Panc1 (cell line): ENCODE measurements at regions of chr3 and their contacts with region 1.

Region 1: DNA sequence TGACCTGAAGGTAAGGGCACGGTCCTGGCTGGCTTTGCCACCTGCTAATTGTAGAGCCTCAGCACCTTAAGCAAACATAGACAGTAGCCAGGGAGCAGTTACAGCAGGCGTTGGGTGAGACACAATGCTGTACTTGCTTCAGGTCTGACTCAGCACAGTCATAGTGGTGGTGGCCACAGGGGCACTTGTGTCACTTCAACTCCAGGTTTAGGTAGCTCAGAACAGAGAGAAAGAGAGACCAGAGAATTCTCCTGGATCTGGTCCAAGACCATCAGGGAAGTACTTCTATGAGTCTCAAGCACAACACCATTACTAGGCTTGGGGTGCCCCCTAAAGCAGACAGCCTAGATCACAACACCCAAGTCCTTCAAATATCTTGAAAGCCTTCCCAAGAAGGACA is 204.4 kb downstream of the OTOL1 start:
- DNase-seq: no peak
- ATAC-seq: no peak
- H3K4me3 ChIP-seq: no peak overlapping the region
- H3K27ac ChIP-seq: no peak overlapping the region
- H3K4me1 ChIP-seq: no peaks in the 10 kb centered on the region
- H3K27me3 ChIP-seq: no peaks in the 10 kb centered on the region
- CTCF ChIP-seq: no peak

Region 2: DNA sequence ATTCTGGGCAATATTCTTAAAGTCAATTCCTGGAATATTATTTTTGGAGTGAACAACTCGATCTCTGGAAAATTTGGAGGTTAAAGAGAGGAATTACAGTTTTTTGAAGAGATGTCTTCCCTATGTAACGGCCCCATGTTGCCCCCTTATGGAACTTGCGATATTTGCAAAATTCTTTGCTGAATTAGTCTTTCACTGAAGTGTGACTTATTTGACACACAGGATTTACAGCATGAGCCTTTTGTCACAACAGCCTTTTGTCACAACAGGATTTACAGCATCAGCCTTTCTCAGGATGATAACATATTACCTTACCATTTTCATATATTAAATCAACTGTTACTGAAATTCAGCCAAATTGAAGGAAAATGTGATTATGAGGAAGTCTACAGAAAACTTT is 291.9 kb before region 1 on chr3:
- CTCF ChIA-PET with region 1: no interaction called
- POLR2A ChIA-PET with region 1: no interaction called
- in situ Hi-C with region 1: no loop called
- intact Hi-C with region 1: no loop called
- DNase-seq: no peak
- ATAC-seq: no peak
- H3K4me3 ChIP-seq: no peak overlapping the region
- H3K27ac ChIP-seq: peak overlapping the region; percentile 36; the same call in 1 of the 2 replicates
- H3K4me1 ChIP-seq: peaks cover 17% of the 10 kb centered on the region; the same call in 1 of the 2 replicates
- H3K27me3 ChIP-seq: no peaks in the 10 kb centered on the region
- CTCF ChIP-seq: peak; percentile 72; the same call in 1 of the 2 replicates

Region 3: GRCh38 chr3:162398554-162398953 is 697.6 kb after region 1 on chr3:
- CTCF ChIA-PET with region 1: no interaction called
- POLR2A ChIA-PET with region 1: interaction called, 15 read pairs
- in situ Hi-C with region 1: no loop called
- intact Hi-C with region 1: no loop called
- DNase-seq: no peak
- ATAC-seq: no peak
- H3K4me3 ChIP-seq: no peak overlapping the region
- H3K27ac ChIP-seq: no peak overlapping the region
- H3K4me1 ChIP-seq: no peaks in the 10 kb centered on the region
- H3K27me3 ChIP-seq: no peaks in the 10 kb centered on the region
- CTCF ChIP-seq: no peak